Esophagus squamous epithelium (tissue), 5 donors: ENCODE measurements at regions of chr2 and their contacts with region 1.

Region 1: GRCh38 chr2:176454893-176455811 is 185.9 kb downstream of the MTX2 start:
- DNase-seq: peak; percentile 17
- H3K4me3 ChIP-seq: no peak overlapping the region
- H3K27ac ChIP-seq: peak overlapping the region in 2 of 4 donors; percentile 42 to 67
- H3K4me1 ChIP-seq: peaks cover 0 to 19% (median 3%) of the 10 kb centered on the region in 3 donors
- H3K27me3 ChIP-seq: peaks cover 0 to 19% (median 0%) of the 10 kb centered on the region in 4 donors
- CTCF ChIP-seq: peak; percentile 84 to 97 (median 90)
- POLR2A ChIP-seq: no peak

Region 2: GRCh38 chr2:176013440-176013839 is 441.7 kb before region 1 on chr2:
- intact Hi-C with region 1: no loop called
- DNase-seq: no peak
- H3K4me3 ChIP-seq: no peak overlapping the region
- H3K27ac ChIP-seq: no peak overlapping the region
- H3K4me1 ChIP-seq: no peaks in the 10 kb centered on the region
- H3K27me3 ChIP-seq: no peaks in the 10 kb centered on the region
- CTCF ChIP-seq: no peak
- POLR2A ChIP-seq: no peak

Region 3: DNA sequence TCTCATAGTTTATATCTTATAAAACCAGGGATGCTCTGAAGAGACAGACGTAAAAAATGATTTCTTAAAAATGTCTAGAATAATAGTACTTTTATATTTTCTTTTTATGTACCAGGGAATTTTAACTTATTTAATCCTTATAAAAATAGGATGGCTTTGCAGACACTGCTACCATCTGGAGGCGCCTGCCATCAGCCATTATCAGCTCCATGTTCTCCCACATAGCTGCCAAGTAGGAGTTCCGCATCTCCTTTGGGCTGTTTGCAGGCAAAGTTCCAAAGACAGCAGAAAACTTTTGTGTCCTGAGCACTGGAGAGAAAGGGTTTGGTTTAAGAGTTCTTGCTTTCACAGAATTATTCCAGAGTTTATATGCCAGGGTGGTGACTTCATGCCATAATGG is 116.8 kb before region 1 on chr2:
- intact Hi-C with region 1: no loop called
- DNase-seq: no peak
- H3K4me3 ChIP-seq: no peak overlapping the region
- H3K27ac ChIP-seq: no peak overlapping the region
- H3K4me1 ChIP-seq: no peaks in the 10 kb centered on the region
- H3K27me3 ChIP-seq: no peaks in the 10 kb centered on the region
- CTCF ChIP-seq: no peak
- POLR2A ChIP-seq: no peak

Region 4: GRCh38 chr2:176554101-176555048 is 99.2 kb after region 1 on chr2:
- intact Hi-C with region 1: loop called (anchors 10 kb)
- DNase-seq: no peak
- H3K4me3 ChIP-seq: peak overlapping the region; percentile 18 to 64 (median 46)
- H3K27ac ChIP-seq: peak overlapping the region; percentile 26 to 82 (median 79)
- H3K4me1 ChIP-seq: peaks cover 7 to 28% (median 13%) of the 10 kb centered on the region in 3 donors
- H3K27me3 ChIP-seq: peaks cover 0 to 52% (median 0%) of the 10 kb centered on the region in 4 donors
- CTCF ChIP-seq: peak; percentile 57 to 87 (median 82)
- POLR2A ChIP-seq: no peak